Calu3 (cell line): ENCODE measurements at regions of chr1 and their contacts with region 1.

Region 1: GRCh38 chr1:220990427-220991339 is 111.4 kb downstream of the HLX start:
- DNase-seq: no peak
- H3K4me3 Mint-ChIP-seq: no peak overlapping the region
- H3K27ac Mint-ChIP-seq: no peak overlapping the region
- H3K4me1 Mint-ChIP-seq: peaks cover 10% of the 10 kb centered on the region
- H3K27me3 Mint-ChIP-seq: no peaks in the 10 kb centered on the region
- CTCF ChIP-seq: no peak

Region 2: DNA sequence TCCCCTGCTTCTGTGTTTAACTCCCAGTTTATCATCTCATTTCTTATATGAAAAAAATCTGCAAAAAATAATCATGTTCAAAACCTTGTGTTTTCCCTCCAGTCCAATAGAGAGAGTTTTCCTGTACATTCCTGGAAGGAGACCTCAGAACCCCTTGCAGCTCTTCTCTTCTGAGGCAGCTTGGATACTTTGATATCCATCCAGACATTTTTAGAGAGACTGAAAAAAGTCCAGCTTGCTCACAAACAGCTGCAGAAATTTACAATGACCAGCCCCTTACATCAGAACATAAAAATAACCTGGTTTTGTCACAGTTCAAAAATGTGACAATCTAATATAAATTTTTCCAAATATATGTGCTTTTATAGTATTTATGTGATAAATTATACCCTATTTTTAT is 373.8 kb before region 1 on chr1:
- CTCF ChIA-PET with region 1: no interaction called
- intact Hi-C with region 1: no loop called
- DNase-seq: no peak
- H3K4me3 Mint-ChIP-seq: no peak overlapping the region
- H3K27ac Mint-ChIP-seq: no peak overlapping the region
- H3K4me1 Mint-ChIP-seq: no peaks in the 10 kb centered on the region
- H3K27me3 Mint-ChIP-seq: no peaks in the 10 kb centered on the region
- CTCF ChIP-seq: no peak

Region 3: DNA sequence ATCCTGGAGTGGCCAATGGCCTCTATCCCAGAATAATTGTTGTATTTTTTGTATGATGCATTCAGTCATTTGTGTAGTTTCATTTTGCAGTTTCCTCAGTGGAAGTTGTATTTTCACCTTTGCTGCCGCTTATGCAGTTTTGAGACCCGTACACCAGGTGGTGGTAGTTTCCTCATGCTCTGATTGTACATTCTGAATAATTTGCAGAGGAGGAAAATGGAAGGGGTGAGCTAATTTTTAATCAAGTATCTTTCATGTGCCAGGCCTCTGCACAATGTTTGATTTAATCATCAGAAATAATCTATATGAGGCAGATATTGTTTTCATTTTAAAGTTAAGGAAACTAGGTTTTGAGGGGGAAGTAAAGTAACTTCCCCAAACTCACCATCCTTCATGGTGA is 81.9 kb before region 1 on chr1:
- CTCF ChIA-PET with region 1: no interaction called
- intact Hi-C with region 1: loop called (anchors 5 kb)
- DNase-seq: peak; percentile 33
- H3K4me3 Mint-ChIP-seq: no peak overlapping the region
- H3K27ac Mint-ChIP-seq: no peak overlapping the region
- H3K4me1 Mint-ChIP-seq: peaks cover 28% of the 10 kb centered on the region
- H3K27me3 Mint-ChIP-seq: peaks cover 2% of the 10 kb centered on the region
- CTCF ChIP-seq: peak; percentile 49

Region 4: GRCh38 chr1:220926146-220926545 is 64.5 kb before region 1 on chr1:
- CTCF ChIA-PET with region 1: no interaction called
- intact Hi-C with region 1: no loop called
- DNase-seq: no peak
- H3K4me3 Mint-ChIP-seq: no peak overlapping the region
- H3K27ac Mint-ChIP-seq: no peak overlapping the region
- H3K4me1 Mint-ChIP-seq: no peaks in the 10 kb centered on the region
- H3K27me3 Mint-ChIP-seq: peaks cover 59% of the 10 kb centered on the region
- CTCF ChIP-seq: no peak